Endothelial cell of umbilical vein (primary cell): ENCODE measurements at regions of chr3 and their contacts with region 1.

Region 1: DNA sequence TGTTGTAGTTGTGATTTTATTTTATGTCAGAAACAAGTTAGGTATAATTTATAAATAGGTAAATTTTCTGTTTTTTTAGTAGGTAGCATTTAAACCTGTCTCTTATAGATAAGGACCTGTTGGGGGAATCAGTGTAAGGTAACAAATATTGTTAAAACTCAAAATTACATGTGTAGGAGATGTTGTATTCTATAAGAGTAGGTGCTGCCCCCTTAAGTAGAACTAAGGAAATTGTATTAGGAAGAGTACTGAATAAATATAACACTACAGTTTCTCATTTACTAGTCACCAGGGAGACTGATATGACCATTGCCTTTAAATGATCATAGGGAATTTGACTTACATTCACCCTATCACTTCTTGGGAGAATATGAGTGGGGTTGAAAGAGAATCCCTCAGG is 31.2 kb downstream of the SLC25A36 start:
- DNase-seq: peak; percentile 29
- H3K4me3 ChIP-seq: no peak overlapping the region
- H3K27ac ChIP-seq: no peak overlapping the region
- H3K4me1 ChIP-seq: no peaks in the 10 kb centered on the region
- H3K27me3 ChIP-seq: no peaks in the 10 kb centered on the region
- CTCF ChIP-seq: peak in 1 of 2 donors; percentile 9
- POLR2A ChIP-seq: no peak

Region 2: DNA sequence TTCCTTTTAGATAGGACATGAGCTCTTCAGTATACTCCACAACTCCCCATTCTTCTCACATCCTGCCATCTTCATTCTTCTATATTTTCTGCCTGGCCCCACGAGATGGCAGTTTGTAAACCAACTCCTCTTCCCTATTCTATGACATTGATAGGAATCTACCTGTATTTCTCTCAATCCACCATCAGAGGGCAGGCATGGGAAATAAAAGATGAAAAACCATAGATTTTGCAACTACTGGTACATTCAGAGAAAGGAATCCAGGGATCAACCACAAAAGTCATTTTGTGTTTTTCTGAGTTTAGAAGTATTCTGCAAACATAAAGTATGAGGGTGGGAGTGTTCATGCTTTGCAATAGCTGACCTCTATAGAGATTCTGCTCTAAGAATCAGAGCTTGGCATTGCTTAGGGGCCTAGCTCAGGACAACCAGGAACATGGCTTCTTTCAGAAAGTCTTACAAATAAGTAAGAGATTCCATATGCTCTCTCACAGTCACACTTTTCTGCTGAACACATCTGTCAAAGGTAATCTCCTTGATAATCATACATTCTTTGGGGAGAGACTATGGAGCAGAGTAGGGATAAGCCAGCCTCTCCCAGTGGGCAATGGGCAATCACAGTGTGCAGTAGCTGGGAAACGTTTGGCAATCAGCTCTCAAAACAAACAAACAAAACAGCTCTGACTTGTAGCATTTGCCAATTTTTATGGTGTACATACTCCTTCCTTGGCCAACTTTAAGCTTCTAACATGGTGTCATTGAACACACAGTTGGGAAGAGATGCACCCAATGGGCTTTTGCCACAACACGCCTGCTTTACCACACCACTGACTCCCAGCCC is 74.3 kb before region 1 on chr3:
- CTCF ChIA-PET with region 1: no interaction called
- POLR2A ChIA-PET with region 1: no interaction called
- dilution Hi-C with region 1: no loop called
- intact Hi-C with region 1: loop called (anchors 2 kb)
- DNase-seq: peak; percentile 55
- H3K4me3 ChIP-seq: no peak overlapping the region
- H3K27ac ChIP-seq: no peak overlapping the region
- H3K4me1 ChIP-seq: no peaks in the 10 kb centered on the region
- H3K27me3 ChIP-seq: no peaks in the 10 kb centered on the region
- CTCF ChIP-seq: peak; percentile 16 to 42
- POLR2A ChIP-seq: no peak

Region 3: GRCh38 chr3:140910860-140911259 is 62.0 kb before region 1 on chr3:
- CTCF ChIA-PET with region 1: no interaction called
- POLR2A ChIA-PET with region 1: no interaction called
- dilution Hi-C with region 1: no loop called
- intact Hi-C with region 1: no loop called
- DNase-seq: peak; percentile 39
- H3K4me3 ChIP-seq: no peak overlapping the region
- H3K27ac ChIP-seq: no peak overlapping the region
- H3K4me1 ChIP-seq: no peaks in the 10 kb centered on the region
- H3K27me3 ChIP-seq: peaks cover 0 to 4% of the 10 kb centered on the region in 2 experiments
- CTCF ChIP-seq: no peak
- POLR2A ChIP-seq: no peak

Region 4: DNA sequence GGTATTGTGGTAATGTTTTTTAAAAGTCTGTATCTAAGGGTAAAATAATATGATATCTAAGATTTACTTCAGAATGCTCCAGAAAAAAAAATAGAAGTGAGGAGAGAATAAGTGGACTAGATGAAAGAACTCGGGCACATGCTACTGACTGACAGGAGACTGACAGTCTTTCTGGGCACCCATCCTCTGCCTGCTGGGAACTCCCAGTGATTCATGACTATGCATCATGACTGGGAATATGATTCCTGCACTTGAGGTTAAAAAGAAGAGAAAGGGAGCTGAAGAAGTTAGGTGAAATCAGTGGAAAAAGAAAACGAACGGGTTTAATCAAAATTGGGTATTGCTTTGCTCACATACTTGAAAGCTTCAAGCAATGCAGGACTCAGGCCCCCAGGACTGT is 42.6 kb after region 1 on chr3:
- CTCF ChIA-PET with region 1: no interaction called
- POLR2A ChIA-PET with region 1: no interaction called
- dilution Hi-C with region 1: no loop called
- intact Hi-C with region 1: no loop called
- DNase-seq: no peak
- H3K4me3 ChIP-seq: no peak overlapping the region
- H3K27ac ChIP-seq: no peak overlapping the region
- H3K4me1 ChIP-seq: no peaks in the 10 kb centered on the region
- H3K27me3 ChIP-seq: peaks cover 0 to 3% of the 10 kb centered on the region in 2 experiments
- CTCF ChIP-seq: no peak
- POLR2A ChIP-seq: no peak

Region 5: DNA sequence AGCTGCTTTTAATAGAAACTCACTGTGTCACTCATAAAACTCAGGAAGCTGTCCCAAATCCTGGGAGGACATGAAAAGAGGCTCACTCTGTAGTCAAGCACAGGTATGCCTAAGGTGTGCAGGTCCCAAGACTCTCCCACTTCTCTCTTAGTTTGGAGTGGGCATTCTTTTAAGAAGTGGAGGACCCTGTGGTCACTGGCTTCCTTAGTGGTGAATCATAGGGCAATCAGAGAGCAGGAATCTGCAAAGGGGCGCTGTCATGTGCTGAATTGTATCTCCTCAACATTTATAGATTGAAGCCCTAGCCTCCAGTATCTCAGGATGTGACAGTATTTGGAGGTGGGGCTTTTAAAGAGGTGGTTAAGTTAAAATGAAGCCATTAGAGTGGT is 348.3 kb after region 1 on chr3:
- CTCF ChIA-PET with region 1: no interaction called
- POLR2A ChIA-PET with region 1: no interaction called
- dilution Hi-C with region 1: no loop called
- intact Hi-C with region 1: no loop called
- DNase-seq: no peak
- H3K4me3 ChIP-seq: no peak overlapping the region
- H3K27ac ChIP-seq: no peak overlapping the region
- H3K4me1 ChIP-seq: peaks cover 14% of the 10 kb centered on the region
- H3K27me3 ChIP-seq: no peaks in the 10 kb centered on the region
- CTCF ChIP-seq: no peak
- POLR2A ChIP-seq: no peak